Caco-2 (cell line): ENCODE measurements at regions of chr10 and their contacts with region 1.

Region 1: GRCh38 chr10:132452631-132453469 is 55.9 kb downstream of the PWWP2B start:
- DNase-seq: peak; percentile 69 to 93
- H3K4me3 ChIP-seq: peak overlapping the region; percentile 19
- H3K4me3 Mint-ChIP-seq: peak overlapping the region; percentile 57
- H3K27ac Mint-ChIP-seq: no peak overlapping the region
- H3K4me1 ChIP-seq: peaks cover 39% of the 10 kb centered on the region
- H3K4me1 Mint-ChIP-seq: peaks cover under 1% of the 10 kb centered on the region
- H3K27me3 ChIP-seq: no peaks in the 10 kb centered on the region
- H3K27me3 Mint-ChIP-seq: no peaks in the 10 kb centered on the region
- CTCF ChIP-seq: peak; percentile 92 to 98

Region 2: GRCh38 chr10:132223156-132223590 is 229.7 kb before region 1 on chr10:
- CTCF ChIA-PET with region 1: no interaction called
- POLR2A ChIA-PET with region 1: no interaction called
- intact Hi-C with region 1: loop called (anchors 2 kb)
- DNase-seq: peak in 1 of 2 experiments; percentile 34
- H3K4me3 ChIP-seq: no peak overlapping the region
- H3K4me3 Mint-ChIP-seq: no peak overlapping the region
- H3K27ac Mint-ChIP-seq: no peak overlapping the region
- H3K4me1 ChIP-seq: no peaks in the 10 kb centered on the region
- H3K4me1 Mint-ChIP-seq: no peaks in the 10 kb centered on the region
- H3K27me3 ChIP-seq: no peaks in the 10 kb centered on the region
- H3K27me3 Mint-ChIP-seq: no peaks in the 10 kb centered on the region
- CTCF ChIP-seq: peak; percentile 23 to 59

Region 3: DNA sequence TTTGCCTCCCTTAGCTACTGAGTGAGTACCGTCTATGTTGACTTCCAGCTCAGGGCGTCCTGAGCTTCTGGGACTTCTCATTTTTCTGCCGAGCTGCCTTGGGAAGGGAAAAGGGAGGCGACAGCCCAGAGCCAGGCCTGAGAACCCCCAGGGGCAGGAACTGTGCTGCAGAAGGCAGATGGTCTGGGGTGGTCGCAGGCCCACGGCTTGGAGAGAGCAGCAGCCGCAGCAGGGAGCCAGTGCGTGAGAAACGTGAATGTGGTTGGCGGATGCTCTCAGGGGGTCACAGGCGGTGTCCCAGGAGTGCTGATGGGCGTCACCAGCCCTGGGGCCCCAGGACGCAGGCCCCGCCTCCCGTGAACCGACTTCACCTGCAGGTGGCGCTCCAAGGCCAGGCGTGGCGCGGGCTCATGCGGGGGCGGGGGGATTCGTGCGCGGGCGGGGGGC is 65.1 kb before region 1 on chr10:
- CTCF ChIA-PET with region 1: no interaction called
- POLR2A ChIA-PET with region 1: no interaction called
- intact Hi-C with region 1: loop called (anchors 2 kb)
- DNase-seq: peak; percentile 66 to 85
- H3K4me3 ChIP-seq: no peak overlapping the region
- H3K4me3 Mint-ChIP-seq: no peak overlapping the region
- H3K27ac Mint-ChIP-seq: no peak overlapping the region
- H3K4me1 ChIP-seq: peaks cover 11% of the 10 kb centered on the region
- H3K4me1 Mint-ChIP-seq: no peaks in the 10 kb centered on the region
- H3K27me3 ChIP-seq: no peaks in the 10 kb centered on the region
- H3K27me3 Mint-ChIP-seq: no peaks in the 10 kb centered on the region
- CTCF ChIP-seq: peak; percentile 68 to 75

Region 4: GRCh38 chr10:132396495-132397035 is 56.3 kb before region 1 on chr10:
- CTCF ChIA-PET with region 1: no interaction called
- POLR2A ChIA-PET with region 1: no interaction called
- intact Hi-C with region 1: loop called (anchors 2 kb)
- DNase-seq: peak; percentile 63 to 85
- H3K4me3 ChIP-seq: peak overlapping the region; percentile 59
- H3K4me3 Mint-ChIP-seq: peak overlapping the region; percentile 56
- H3K27ac Mint-ChIP-seq: no peak overlapping the region
- H3K4me1 ChIP-seq: peaks cover 20% of the 10 kb centered on the region
- H3K4me1 Mint-ChIP-seq: no peaks in the 10 kb centered on the region
- H3K27me3 ChIP-seq: no peaks in the 10 kb centered on the region
- H3K27me3 Mint-ChIP-seq: no peaks in the 10 kb centered on the region
- CTCF ChIP-seq: peak; percentile 3 to 13

Region 5: DNA sequence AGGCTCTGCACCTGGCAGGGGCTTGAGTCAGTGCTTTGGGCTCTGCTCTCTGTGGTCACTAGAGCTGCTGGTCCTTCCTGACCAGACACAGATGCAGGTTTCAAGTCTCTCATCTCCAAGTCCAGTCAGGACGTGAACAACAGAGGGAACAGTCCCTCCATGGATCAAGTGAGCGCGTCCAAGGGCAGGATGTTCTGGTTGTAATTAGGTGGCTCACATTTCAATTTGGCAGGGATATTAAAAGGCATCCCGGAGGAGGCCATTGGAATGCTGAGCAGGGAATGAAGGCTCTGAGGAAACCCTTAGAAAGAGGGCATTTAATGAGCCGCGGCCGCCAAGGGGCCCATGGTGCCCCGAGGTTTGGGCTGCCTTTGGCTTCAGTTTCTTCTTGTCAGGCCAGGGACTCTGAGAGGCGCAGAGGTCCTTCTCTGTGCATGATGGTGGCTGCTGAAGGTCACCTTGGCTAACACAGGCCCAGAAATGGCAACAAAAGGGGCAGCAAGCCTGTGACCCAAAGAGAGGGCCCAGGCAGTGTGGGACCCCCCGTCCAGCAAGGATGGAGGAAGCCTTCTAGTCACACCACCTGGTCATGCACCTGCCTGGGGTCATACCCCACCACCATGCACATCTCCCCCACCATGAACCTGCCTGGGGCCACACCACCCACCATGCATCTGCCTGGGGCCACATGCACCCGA is 54.0 kb after region 1 on chr10:
- CTCF ChIA-PET with region 1: no interaction called
- POLR2A ChIA-PET with region 1: no interaction called
- intact Hi-C with region 1: no loop called
- DNase-seq: no peak
- H3K4me3 ChIP-seq: no peak overlapping the region
- H3K4me3 Mint-ChIP-seq: no peak overlapping the region
- H3K27ac Mint-ChIP-seq: no peak overlapping the region
- H3K4me1 ChIP-seq: no peaks in the 10 kb centered on the region
- H3K4me1 Mint-ChIP-seq: no peaks in the 10 kb centered on the region
- H3K27me3 ChIP-seq: no peaks in the 10 kb centered on the region
- H3K27me3 Mint-ChIP-seq: no peaks in the 10 kb centered on the region
- CTCF ChIP-seq: no peak